ENCODE measurements at regions of chr9 and their contacts with region 1.

Region 1: DNA sequence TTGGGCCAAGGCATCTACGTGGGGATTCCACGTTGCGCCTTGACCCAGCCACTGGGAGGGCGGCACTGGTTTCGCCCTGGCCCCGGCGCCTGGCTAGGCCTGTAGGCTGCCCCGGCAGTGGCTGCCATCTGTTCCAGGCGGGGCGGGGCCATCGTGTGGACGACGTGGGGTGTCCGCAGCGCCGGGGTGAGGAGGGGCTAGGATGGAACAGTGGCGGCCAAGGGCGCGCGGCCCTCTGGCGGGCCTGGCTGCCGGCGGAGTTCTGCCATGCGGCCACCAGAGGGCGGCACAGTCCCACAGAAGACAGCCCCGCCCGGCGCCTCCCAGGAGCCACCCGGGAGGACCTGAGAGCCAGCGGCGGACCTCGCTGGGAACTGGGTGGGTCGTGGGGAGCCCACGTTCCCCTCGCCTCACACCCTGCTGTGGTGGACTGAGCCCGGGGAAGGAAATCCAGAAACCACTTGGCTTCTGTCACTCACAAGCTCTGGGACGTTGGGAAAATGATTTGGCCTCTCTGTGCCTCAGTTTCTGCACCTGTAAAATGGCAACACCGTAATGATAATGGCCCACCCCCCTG is 22.6 kb upstream of the RAPGEF1 start:
- DNase-seq: peak; percentile 93

Region 2: GRCh38 chr9:131784748-131785501 is 22.5 kb after region 1 on chr9:
- intact Hi-C with region 1: loop called in 1 of 2 experiments (anchors 1 kb)
- DNase-seq: no peak

Region 3: GRCh38 chr9:132244582-132245455 is 482.4 kb after region 1 on chr9:
- intact Hi-C with region 1: loop called (anchors 5 kb)
- DNase-seq: no peak

Region 4: DNA sequence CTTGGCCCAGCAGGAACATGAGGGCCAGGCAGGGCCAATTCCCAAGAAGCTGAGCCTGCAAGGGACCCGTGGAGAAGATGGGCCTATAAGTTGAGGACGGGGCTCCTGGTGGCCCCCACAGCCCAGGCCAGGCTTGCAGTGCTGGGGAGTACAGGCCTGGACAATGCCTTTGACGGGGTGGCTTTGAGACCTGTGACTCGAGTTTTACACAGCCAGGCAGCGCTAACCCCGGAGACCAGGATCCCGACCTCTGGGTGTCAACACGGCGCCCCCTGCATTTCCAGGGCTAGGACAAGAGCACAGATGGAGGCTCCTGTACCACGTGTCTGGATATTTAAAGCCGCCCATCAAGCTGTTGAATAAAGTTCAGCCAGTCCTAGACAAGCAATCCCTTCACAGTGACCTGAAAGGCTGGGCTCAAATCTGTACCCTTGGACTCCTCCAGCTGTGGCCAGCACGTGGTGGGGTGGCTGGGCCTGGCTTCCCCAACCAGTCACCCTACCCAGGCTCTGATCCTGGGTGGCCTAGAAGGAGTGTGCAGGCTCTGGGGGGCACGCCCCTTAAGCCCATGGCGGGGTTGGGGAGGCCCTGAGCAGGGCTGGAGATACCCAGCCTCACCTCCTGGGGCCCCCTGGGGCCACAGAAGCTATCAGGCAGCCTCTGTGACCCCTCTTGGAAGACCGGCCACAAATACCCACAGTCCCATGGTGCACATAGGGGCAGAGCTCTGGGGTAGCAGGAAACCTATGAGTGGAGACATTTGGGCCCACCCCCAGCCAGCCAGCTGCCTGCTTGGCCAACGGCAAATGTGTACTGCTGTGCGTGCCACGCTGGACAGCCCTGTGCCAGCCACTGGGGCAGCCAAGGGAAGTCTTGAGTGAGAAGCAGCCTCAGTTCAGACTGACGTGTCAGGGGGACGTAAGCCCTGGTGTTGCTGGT is 488.1 kb after region 1 on chr9:
- intact Hi-C with region 1: loop called (anchors 5 kb)
- DNase-seq: peak; percentile 71

Measured in posterior vena cava (tissue), 2 donors.